ENCODE measurements at regions of chr14 and their contacts with region 1.

Region 1: GRCh38 chr14:23120541-23121251 is 1.6 kb upstream of the CEBPE start:
- H3K4me3 ChIP-seq: no peak overlapping the region
- H3K27ac ChIP-seq: no peak overlapping the region
- H3K4me1 ChIP-seq: no peaks in the 10 kb centered on the region
- CTCF ChIP-seq: peak; percentile 99

Region 2: DNA sequence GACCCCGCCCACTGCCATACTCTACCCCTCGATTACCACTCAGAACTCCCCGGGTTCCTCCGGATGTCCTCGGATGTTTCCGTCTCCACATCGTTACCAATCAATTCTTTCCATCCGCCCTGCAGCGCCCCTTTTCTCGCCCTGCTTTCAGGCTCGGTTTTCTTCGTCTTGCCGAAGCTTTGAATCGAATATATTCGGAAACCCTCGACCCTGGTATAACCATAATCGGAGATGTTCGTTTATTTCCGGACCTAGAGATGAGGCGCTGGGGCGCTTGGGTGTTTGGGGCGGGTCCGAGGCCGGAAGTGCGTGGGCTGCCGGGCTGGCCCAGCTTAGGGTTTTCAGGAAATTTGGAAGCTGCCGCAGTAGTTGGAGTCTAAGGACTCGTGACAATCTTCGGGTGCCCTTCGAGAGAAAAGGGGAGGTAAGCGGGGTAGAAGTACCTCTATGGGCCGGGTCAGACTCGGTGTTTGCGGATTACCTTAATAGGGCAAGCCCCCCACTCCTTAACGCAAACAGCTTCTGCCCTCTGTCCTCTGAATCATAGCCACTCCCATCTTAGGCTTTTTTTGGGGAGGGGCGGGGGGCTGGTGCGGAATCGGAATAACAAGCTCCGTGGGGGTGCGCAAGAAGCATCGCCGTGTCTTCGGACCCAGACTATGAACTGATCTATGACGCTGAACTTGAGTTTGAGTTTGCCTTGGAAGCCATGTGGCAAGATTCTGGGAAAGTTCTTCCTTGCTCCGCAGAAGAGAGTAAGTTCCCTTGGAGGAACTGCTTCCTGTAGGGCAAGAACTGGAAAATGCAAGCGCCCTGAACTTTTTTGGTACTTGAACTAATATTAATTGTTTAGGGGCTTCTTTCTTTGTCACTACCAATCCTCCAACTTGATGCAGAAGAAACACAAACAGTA is 25.2 kb before region 1 on chr14 and contains the start of gene C14orf119:
- CTCF ChIA-PET with region 1: interaction called, 13 read pairs
- POLR2A ChIA-PET with region 1: interaction called, 9 read pairs
- H3K4me3 ChIP-seq: peak within 1 kb of the TSS; percentile 97
- H3K27ac ChIP-seq: peak within 1 kb of the TSS; percentile 92
- H3K4me1 ChIP-seq: peaks cover 10% of the 10 kb centered on the region; the same call in 1 of the 2 replicates
- CTCF ChIP-seq: no peak

Region 3: GRCh38 chr14:23141671-23142451 is 21.2 kb after region 1 on chr14:
- CTCF ChIA-PET with region 1: interaction called, 20 read pairs
- POLR2A ChIA-PET with region 1: no interaction called
- H3K4me3 ChIP-seq: no peak overlapping the region
- H3K27ac ChIP-seq: no peak overlapping the region
- H3K4me1 ChIP-seq: 0 out of 2 replicates have a peak, but pooled peaks cover 2% of the 10 kb centered on the region
- CTCF ChIP-seq: no peak

Region 4: GRCh38 chr14:23174276-23175184 is 53.8 kb after region 1 on chr14:
- CTCF ChIA-PET with region 1: interaction called, 68 read pairs
- POLR2A ChIA-PET with region 1: no interaction called
- H3K4me3 ChIP-seq: no peak overlapping the region
- H3K27ac ChIP-seq: no peak overlapping the region
- H3K4me1 ChIP-seq: peaks cover 23% of the 10 kb centered on the region
- CTCF ChIP-seq: no peak

Region 5: GRCh38 chr14:23209651-23210423 is 89.1 kb after region 1 on chr14:
- CTCF ChIA-PET with region 1: interaction called, 10 read pairs
- POLR2A ChIA-PET with region 1: no interaction called
- H3K4me3 ChIP-seq: no peak overlapping the region
- H3K27ac ChIP-seq: no peak overlapping the region
- H3K4me1 ChIP-seq: no peaks in the 10 kb centered on the region
- CTCF ChIP-seq: no peak

Region 6: GRCh38 chr14:23301288-23301968 is 180.7 kb after region 1 on chr14:
- CTCF ChIA-PET with region 1: interaction called, 11 read pairs
- POLR2A ChIA-PET with region 1: no interaction called
- H3K4me3 ChIP-seq: peak overlapping the region; percentile 66
- H3K27ac ChIP-seq: peak overlapping the region; percentile 97
- H3K4me1 ChIP-seq: peaks cover 13% of the 10 kb centered on the region; the same call in 1 of the 2 replicates
- CTCF ChIP-seq: peak; percentile 61; the same call in 1 of the 2 replicates

Measured in HEK293 (cell line).